Esophagus muscularis mucosa (tissue), 4 donors: ENCODE measurements at regions of chr2 and their contacts with region 1.

Region 1: GRCh38 chr2:49753344-49753985 is 599.1 kb upstream of the FSHR start:
- DNase-seq: no peak
- H3K4me3 ChIP-seq: no peak overlapping the region
- H3K27ac ChIP-seq: no peak overlapping the region
- H3K4me1 ChIP-seq: no peaks in the 10 kb centered on the region
- H3K27me3 ChIP-seq: no peaks in the 10 kb centered on the region
- CTCF ChIP-seq: no peak
- EP300 ChIP-seq: no peak
- POLR2A ChIP-seq: no peak

Region 2: DNA sequence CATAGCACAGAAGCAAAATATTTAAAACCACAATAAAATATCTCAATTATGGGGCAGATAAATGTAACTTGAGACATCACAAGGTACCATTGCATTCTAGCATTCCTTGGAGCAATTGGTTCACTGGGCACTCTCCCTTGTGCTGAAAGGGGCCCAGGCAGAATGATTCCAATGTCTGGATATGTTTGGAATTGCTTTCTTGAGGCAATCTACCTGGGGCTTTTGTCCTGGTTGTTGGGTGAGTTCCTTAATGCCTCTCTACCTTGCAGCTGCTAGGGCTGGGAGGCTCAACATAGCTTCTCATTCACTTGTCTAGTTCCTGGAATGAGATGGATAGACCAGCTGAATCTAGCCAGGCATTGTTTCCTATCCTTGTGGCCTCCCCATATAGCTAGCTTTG is 59.5 kb before region 1 on chr2:
- intact Hi-C with region 1: no loop called
- DNase-seq: no peak
- H3K4me3 ChIP-seq: no peak overlapping the region
- H3K27ac ChIP-seq: no peak overlapping the region
- H3K4me1 ChIP-seq: no peaks in the 10 kb centered on the region
- H3K27me3 ChIP-seq: no peaks in the 10 kb centered on the region
- CTCF ChIP-seq: no peak
- EP300 ChIP-seq: no peak
- POLR2A ChIP-seq: no peak

Region 3: GRCh38 chr2:49714454-49714853 is 39.0 kb before region 1 on chr2:
- intact Hi-C with region 1: no loop called
- DNase-seq: no peak
- H3K4me3 ChIP-seq: no peak overlapping the region
- H3K27ac ChIP-seq: no peak overlapping the region
- H3K4me1 ChIP-seq: peaks cover 0 to 9% (median 0%) of the 10 kb centered on the region in 4 donors
- H3K27me3 ChIP-seq: no peaks in the 10 kb centered on the region
- CTCF ChIP-seq: no peak
- EP300 ChIP-seq: no peak
- POLR2A ChIP-seq: no peak

Region 4: DNA sequence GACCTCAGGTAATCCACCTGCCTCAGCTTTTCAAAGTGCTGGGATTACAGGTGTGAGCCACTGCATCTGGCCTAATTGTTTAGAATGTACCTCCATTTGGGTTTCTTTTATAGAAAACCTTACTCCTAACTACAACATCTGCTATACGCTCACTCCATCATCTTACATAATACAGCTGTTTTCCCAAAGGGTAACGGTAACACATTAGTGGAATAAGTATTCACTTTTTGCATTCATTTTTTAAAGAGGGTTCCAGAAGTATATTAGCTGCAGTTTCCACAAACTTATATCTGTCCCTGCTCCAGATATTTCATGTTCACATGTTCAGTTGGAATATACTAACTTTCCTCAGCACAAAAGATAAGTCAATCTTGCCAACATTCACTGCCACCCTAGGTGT is 40.9 kb after region 1 on chr2:
- intact Hi-C with region 1: loop called (anchors 5 kb)
- DNase-seq: no peak
- H3K4me3 ChIP-seq: no peak overlapping the region
- H3K27ac ChIP-seq: no peak overlapping the region
- H3K4me1 ChIP-seq: no peaks in the 10 kb centered on the region
- H3K27me3 ChIP-seq: no peaks in the 10 kb centered on the region
- CTCF ChIP-seq: no peak
- EP300 ChIP-seq: no peak
- POLR2A ChIP-seq: no peak